ENCODE measurements at regions of chr1 and their contacts with region 1.

Region 1: GRCh38 chr1:63691701-63692425 is 82.0 kb upstream of the ROR1 start:
- DNase-seq: peak; percentile 54
- CTCF ChIP-seq: peak; percentile 69

Region 2: DNA sequence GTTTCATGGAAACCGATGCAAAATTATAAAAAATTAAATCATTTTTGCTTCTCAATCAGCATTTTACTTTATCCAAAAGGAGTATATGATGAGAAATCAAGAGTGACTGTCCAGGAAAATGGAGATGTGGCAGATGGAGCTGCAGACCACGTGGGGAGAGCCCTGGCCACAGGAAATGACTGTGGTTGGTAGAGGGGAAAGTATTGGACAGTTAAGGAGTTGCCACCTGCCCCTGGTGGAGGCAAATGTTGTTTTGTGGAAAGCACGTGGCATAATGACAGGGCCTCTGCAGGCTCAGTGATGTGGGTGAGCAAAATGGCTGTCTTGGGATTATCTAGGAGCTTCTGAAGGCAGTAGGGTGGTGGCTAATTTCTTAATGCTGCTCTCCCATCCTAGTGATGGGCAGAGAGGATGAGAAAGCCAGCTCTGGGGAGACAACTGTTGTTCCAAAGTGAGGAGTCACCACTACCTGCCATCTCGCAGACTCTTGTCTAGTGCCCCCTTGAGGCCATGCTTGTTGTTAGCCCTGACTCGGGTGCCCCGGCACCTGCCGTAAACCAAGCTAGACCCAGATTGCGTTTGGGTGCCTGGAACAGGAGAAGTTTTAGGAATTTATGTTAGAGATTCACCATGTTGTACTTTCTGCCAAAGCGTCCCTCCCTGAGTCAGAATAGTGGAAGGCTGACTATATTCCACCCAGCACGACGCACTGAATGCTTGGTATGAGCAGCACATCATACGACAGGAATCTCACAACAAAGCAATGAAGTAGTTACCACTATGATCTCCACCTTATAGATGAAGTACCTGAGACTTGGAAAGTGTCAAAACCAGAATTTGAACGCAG is 225.9 kb after region 1 on chr1:
- in situ Hi-C with region 1: loop called (anchors 10 kb)
- DNase-seq: no peak
- CTCF ChIP-seq: peak; percentile 29

Region 3: DNA sequence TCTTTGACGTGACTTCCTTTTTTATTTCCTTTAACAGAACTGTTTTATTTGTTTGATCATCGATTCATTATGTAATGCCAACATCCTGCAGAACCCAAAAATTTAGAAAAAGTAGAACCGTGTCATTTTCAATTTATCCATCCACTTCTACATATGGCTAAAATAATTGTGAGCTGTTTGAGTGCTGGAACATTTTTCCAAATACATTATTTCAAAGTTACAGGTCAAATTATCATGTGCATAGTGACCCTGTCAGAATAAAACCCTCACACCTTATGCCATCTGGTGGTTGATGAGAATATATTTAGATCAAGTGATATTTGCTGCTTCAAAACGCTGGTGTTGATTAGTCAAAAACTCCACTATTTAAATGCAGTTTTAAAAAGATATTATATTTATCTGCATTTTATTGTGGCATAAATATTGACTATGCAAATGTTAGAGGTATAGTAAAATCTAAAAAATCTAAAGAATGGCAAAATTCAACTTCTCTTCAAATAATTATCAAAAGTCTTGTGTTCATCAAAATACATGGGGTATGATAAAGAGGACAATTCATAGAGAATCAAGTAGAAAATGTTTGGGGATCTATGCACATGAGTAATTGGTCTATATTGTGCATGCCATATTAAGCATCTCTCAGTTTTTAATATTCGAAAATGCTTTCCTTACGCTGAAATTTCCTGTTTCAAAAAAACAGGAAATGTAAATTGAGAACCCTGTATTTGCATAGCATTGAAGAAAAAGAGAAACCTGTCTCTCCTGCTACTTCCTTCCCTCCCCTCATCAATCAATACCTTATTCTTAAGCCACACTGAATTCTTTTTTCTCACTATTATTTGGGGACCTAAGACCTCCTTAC is 551.3 kb after region 1 on chr1:
- in situ Hi-C with region 1: loop called (anchors 25 kb)
- DNase-seq: no peak
- CTCF ChIP-seq: no peak